ENCODE measurements at regions of chr12 and their contacts with region 1.

Region 1: DNA sequence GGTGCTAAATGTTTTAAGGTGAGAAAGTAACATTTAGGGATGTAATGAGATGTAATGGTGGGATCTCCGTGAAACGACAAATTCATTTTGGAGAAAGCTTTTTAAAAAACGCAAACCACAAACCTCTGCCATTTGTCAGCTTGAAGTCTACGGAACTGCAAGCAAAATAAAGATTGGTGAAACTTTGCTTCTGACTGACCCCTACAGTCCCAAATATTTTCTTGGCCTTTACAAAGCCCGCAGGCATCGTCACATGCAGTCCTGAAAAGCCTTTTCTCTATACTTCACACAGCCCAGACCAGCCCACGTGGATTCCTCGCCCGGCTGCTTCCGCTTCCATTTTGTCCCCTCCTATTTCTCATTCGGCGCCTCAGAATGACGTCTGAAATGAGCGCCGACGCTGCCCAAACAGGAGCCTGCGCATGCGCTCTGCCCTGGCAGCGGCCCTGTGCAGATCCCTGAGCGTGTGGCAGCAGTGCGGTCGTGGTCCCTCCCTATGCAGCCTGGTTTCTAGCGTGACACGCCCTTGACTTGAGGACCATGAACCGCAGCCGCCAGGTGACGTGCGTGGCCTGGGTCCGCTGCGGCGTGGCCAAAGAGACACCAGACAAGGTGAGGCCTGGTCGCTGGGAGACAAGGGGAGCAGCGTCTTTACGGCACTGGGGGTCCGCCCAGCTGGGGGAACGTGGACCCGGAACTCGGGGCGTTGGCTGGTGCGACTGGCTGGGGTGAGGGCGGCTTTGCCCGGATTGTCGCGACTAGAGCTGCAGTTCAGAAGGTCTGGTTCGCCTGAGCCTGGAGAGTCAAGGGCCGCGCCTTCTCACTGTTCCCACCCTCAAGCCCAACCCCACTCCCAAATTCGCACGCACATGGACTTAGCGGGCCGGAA is at the start of gene PWP1:
- DNase-seq: peak; percentile 93
- H3K4me3 ChIP-seq: peak within 1 kb of the TSS; percentile 87
- H3K27ac ChIP-seq: peak within 1 kb of the TSS; percentile 75
- H3K27me3 ChIP-seq: no peaks in the 10 kb centered on the region
- CTCF ChIP-seq: no peak

Region 2: GRCh38 chr12:107477947-107478610 is 207.5 kb before region 1 on chr12:
- in situ Hi-C with region 1: no loop called
- DNase-seq: no peak
- H3K4me3 ChIP-seq: no peak overlapping the region
- H3K27ac ChIP-seq: no peak overlapping the region
- H3K27me3 ChIP-seq: no peaks in the 10 kb centered on the region
- CTCF ChIP-seq: no peak

Region 3: DNA sequence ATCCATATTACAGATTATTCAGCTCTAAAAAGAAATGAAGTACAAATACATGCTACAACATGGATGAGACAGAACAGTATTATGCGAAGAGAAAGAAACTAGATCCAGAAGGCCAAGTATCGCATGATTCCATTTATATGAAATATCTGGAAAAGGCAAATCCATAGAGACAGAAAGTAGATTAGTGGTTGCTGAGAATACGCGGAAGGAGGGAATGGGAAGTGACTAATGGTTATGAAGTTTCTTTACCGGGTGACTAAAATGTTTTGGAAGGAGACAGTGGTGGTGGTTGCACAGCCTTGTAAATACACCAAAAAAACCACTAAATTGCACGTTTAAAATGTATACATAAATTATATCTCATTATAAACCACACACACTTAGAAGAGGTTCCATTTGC is 62.9 kb after region 1 on chr12:
- in situ Hi-C with region 1: loop called (anchors 10 kb)
- DNase-seq: peak; percentile 71
- H3K4me3 ChIP-seq: no peak overlapping the region
- H3K27ac ChIP-seq: peak overlapping the region; percentile 84
- H3K27me3 ChIP-seq: no peaks in the 10 kb centered on the region
- CTCF ChIP-seq: no peak

Measured in brain microvascular endothelial cell (primary cell).